ENCODE measurements at regions of chr12 and their contacts with region 1.

Region 1: DNA sequence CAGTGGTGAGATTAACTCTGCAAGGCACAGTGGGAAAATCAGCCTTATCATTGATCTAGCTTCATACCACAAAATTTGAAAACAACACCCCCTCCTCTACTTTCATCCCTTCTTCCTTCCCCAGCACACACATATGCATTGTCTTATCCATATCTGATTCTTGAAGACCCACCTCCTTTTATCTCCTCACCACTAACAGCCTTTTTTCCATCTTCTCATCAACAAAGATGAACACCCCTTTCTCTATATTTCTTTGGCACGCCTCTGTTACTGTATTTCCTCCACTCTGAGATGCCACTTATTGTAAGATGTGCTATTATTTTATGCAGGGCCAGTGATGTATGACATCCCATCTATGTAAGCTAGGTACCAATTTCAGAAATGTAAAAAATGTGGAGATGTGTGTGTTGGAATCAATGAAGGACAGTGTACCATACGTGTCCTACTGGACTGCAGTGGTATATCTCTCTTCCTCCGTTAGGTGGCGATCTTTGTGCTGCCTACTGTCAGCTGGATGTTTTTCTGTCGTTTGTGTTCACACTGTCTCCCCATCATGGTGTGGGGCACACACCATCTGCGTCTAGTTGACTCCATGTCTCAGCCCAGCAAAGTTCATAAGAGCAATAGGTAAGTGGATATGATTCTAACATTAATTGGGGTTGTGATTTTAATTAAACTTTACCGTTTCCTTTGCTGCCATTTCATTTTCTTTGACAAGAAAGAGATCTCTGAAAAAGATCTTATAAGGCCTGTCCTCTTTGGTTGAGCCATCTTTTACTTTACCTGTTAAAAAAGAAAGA is 24.0 kb downstream of the CCDC38 start:
- DNase-seq: peak; percentile 54 to 58
- H3K4me3 ChIP-seq: no peak overlapping the region
- H3K4me1 ChIP-seq: no peaks in the 10 kb centered on the region
- H3K27me3 ChIP-seq: peaks cover 41% of the 10 kb centered on the region

Region 2: DNA sequence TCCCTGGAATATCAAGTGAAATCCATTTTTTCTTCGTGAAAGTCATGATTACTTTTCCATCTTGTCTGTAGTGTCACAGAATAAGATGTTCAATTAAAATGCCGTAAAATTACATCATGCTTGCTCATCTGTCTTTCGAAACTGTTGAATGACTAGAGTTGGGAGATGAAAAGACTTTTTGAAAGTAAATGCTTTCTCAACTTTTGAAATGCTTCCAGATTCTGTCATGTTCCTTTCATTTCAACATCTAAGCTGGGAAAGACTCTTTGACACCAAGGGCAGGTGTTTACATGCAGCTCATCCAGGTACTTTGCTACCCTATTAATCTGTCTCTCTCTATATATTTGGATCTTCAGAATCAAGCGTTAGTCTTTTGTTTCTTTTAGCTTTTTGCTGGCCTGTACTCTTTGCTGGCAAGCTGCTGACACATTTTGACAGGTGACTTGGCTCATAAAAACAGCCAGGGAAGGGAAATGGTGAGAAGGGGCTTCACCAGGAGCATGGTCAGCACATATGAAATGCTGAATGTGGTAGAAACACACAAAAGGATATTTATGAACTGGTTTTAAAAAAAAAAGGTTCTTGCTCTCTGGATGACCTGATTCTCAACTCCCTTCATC is 521.4 kb before region 1 on chr12:
- in situ Hi-C with region 1: no loop called
- DNase-seq: no peak
- H3K4me3 ChIP-seq: no peak overlapping the region
- H3K4me1 ChIP-seq: no peaks in the 10 kb centered on the region; the same call in 1 of the 2 replicates
- H3K27me3 ChIP-seq: peaks cover 23% of the 10 kb centered on the region

Region 3: DNA sequence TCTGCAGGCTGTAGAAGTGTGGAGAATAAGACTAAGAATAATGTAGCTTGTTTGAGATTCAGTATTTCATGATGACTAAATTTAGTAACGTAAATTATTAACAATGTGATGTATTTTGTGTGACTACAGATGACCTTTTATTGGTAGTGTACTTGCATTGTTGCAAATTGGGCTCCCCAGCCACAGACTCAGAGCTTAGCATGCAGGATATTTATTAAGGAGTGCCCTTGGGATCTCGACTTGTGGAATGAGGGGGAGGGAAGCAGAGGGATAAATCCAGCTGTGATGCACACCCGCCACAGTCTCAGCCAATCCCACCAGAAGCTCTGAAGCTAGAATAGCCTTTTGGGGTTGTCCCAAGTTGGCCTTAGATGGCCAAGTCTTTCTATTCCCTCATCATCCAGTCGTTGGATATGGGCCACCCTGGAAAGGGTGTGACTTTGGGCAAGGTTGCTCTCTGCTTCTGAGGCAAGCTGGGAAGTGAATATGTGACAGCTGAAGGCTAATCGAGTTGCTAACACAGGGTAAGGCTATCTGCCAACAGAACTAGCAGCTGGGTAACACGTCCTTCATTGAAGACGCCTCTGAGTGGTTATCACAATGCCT is 325.0 kb before region 1 on chr12:
- in situ Hi-C with region 1: no loop called
- DNase-seq: peak; percentile 21
- H3K4me3 ChIP-seq: no peak overlapping the region
- H3K4me1 ChIP-seq: peaks cover 22% of the 10 kb centered on the region
- H3K27me3 ChIP-seq: 0 out of 2 replicates have a peak, but pooled peaks cover 1% of the 10 kb centered on the region

Region 4: GRCh38 chr12:95976416-95976832 is 58.0 kb after region 1 on chr12:
- in situ Hi-C with region 1: loop called (anchors 5 kb)
- DNase-seq: no peak
- H3K4me3 ChIP-seq: no peak overlapping the region
- H3K4me1 ChIP-seq: no peaks in the 10 kb centered on the region
- H3K27me3 ChIP-seq: no peaks in the 10 kb centered on the region

Region 5: DNA sequence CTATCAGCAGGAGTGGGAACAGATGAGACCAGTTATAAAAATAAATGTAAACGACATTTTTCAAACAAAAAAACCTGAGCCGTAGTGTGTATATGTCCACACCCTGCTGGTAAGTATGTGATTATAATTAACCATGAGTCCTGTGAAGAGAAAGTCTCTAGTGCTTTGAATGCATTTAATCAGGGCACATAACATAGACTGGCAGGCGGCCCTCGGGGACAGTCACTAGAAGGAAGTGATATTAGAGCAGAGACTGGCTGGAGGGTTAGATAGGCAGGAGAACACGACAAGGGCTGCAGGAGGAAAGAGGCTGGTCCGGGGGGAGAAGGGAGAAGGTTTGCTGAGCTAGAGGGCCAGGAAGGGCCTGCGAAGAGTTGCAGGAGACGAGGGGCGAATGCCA is 251.9 kb after region 1 on chr12:
- in situ Hi-C with region 1: no loop called
- DNase-seq: no peak
- H3K4me3 ChIP-seq: no peak overlapping the region
- H3K4me1 ChIP-seq: no peaks in the 10 kb centered on the region
- H3K27me3 ChIP-seq: no peaks in the 10 kb centered on the region

Measured in HAP-1 (cell line).